Endothelial cell of umbilical vein (primary cell): ENCODE measurements at regions of chr17 and their contacts with region 1.

Region 1: GRCh38 chr17:57243171-57243948 is 13.0 kb upstream of the MSI2 start:
- DNase-seq: peak; percentile 66
- H3K4me3 ChIP-seq: no peak overlapping the region
- H3K27ac ChIP-seq: no peak overlapping the region
- H3K4me1 ChIP-seq: no peaks in the 10 kb centered on the region
- H3K27me3 ChIP-seq: peaks cover 13 to 16% of the 10 kb centered on the region in 2 experiments
- CTCF ChIP-seq: peak; percentile 100
- POLR2A ChIP-seq: no peak

Region 2: GRCh38 chr17:57195785-57196460 is 47.4 kb before region 1 on chr17:
- CTCF ChIA-PET with region 1: interaction called, 10 read pairs
- POLR2A ChIA-PET with region 1: no interaction called
- dilution Hi-C with region 1: no loop called
- intact Hi-C with region 1: no loop called
- DNase-seq: no peak
- H3K4me3 ChIP-seq: no peak overlapping the region
- H3K27ac ChIP-seq: no peak overlapping the region
- H3K4me1 ChIP-seq: no peaks in the 10 kb centered on the region
- H3K27me3 ChIP-seq: peaks cover 0 to 10% of the 10 kb centered on the region in 2 experiments
- CTCF ChIP-seq: no peak
- POLR2A ChIP-seq: no peak

Region 3: DNA sequence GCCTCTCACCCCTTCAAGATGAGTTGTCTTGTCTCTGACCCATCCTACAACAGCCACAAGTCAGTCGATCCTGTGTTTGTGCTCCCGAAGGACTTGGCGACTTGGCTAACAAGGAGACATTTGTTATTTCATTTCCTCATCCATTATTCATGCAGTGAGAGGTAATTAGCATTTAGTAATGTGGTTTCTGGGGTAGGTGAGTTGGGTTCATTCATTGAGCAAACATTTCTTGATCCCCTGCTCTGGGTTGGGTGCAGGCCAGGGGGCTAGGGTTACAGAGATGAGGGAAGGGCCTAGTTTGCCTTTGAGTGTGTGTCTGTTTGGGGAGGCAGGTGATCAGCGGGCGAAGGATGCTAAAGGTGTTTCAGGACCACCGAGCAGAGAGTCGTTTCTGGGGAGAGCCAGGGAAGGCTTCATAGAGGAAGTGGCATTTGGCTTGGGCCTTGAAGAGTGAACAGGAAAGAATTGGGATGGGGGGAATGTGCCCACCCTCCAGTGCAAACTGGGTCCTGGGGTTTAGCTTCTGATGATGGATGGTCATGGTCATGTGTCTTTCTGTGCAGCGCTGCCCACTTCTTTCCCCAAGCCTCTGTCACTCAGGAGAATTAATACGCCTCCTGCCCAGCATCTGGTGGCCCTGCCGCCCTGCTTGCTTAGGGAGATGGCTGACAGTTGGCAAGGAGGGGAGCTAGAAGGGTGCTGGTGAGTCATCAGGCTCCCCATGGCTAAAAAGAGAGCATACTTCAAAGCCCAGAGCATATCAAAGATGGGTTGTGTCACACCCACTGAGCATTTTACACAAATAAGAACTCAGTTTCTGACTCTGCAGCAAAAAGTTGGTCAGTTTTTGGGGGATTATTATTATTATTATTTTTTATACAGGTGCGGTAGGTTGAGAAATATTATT is 51.5 kb after region 1 on chr17:
- CTCF ChIA-PET with region 1: interaction called, 12 read pairs
- POLR2A ChIA-PET with region 1: no interaction called
- dilution Hi-C with region 1: no loop called
- intact Hi-C with region 1: no loop called
- DNase-seq: peak; percentile 4
- H3K4me3 ChIP-seq: peak overlapping the region in 1 of 3 experiments; percentile 16
- H3K27ac ChIP-seq: peak overlapping the region; percentile 83
- H3K4me1 ChIP-seq: peaks cover 22% of the 10 kb centered on the region
- H3K27me3 ChIP-seq: no peaks in the 10 kb centered on the region
- CTCF ChIP-seq: no peak
- POLR2A ChIP-seq: no peak

Region 4: GRCh38 chr17:57468932-57469775 is 225.8 kb after region 1 on chr17:
- CTCF ChIA-PET with region 1: interaction called, 21 read pairs
- POLR2A ChIA-PET with region 1: no interaction called
- dilution Hi-C with region 1: no loop called
- intact Hi-C with region 1: no loop called
- DNase-seq: no peak
- H3K4me3 ChIP-seq: no peak overlapping the region
- H3K27ac ChIP-seq: no peak overlapping the region
- H3K4me1 ChIP-seq: peaks cover 10% of the 10 kb centered on the region
- H3K27me3 ChIP-seq: no peaks in the 10 kb centered on the region
- CTCF ChIP-seq: no peak
- POLR2A ChIP-seq: no peak

Region 5: GRCh38 chr17:57552114-57552624 is 308.8 kb after region 1 on chr17:
- CTCF ChIA-PET with region 1: interaction called, 12 read pairs
- POLR2A ChIA-PET with region 1: no interaction called
- dilution Hi-C with region 1: no loop called
- intact Hi-C with region 1: no loop called
- DNase-seq: no peak
- H3K4me3 ChIP-seq: no peak overlapping the region
- H3K27ac ChIP-seq: no peak overlapping the region
- H3K4me1 ChIP-seq: peaks cover 3% of the 10 kb centered on the region
- H3K27me3 ChIP-seq: no peaks in the 10 kb centered on the region
- CTCF ChIP-seq: peak; percentile 24 to 54
- POLR2A ChIP-seq: no peak

Region 6: DNA sequence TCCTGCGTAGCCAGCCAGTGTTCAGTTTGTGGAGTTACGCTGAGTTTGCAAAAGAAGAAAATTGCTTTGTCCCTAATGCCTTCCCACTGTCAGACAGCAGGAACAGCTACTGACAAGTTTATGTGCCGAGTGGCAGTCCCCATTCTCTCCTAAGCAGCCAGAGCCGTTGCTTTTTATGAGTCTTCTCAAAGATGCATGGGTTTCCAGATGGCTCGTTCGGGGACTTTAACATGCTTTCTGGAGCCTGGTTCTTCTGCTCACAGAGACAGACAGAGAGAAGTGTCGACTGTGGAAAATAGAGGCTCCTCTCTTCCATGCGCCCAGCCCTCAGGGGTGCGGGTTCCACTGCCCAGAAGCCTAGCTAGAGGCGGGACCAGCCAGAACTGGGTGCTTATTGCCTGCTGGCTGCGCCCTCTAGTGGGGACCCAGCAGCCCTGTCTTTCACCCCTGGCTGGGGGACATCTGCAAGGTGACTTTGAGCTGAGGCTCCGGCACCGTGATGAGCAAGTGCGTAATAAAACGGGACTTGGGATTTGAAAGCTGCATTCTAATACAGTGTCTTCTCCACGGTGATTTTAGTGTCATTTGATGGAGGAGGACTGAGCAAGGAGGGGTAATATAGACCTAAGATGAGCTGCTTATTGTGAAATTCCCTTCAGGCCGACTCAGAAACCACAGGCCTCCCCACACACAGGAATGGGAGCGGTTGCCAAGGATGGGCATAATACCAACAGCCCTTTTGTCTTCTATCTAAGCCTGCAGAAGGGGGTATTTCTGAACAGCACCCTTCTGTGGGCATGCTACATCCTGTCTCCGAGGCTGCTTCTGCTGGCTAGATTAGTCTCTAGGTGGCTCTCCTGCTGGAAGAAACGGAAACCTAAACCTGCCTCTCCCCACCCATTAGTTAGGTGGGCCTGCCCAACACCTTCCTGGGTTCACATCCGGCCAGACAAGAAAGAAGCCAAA is 428.6 kb after region 1 on chr17:
- CTCF ChIA-PET with region 1: interaction called, 143 read pairs
- POLR2A ChIA-PET with region 1: no interaction called
- dilution Hi-C with region 1: no loop called
- intact Hi-C with region 1: loop called (anchors 1 kb)
- DNase-seq: peak; percentile 55
- H3K4me3 ChIP-seq: no peak overlapping the region
- H3K27ac ChIP-seq: no peak overlapping the region
- H3K4me1 ChIP-seq: no peaks in the 10 kb centered on the region
- H3K27me3 ChIP-seq: no peaks in the 10 kb centered on the region
- CTCF ChIP-seq: peak; percentile 91 to 94
- POLR2A ChIP-seq: no peak

Region 7: DNA sequence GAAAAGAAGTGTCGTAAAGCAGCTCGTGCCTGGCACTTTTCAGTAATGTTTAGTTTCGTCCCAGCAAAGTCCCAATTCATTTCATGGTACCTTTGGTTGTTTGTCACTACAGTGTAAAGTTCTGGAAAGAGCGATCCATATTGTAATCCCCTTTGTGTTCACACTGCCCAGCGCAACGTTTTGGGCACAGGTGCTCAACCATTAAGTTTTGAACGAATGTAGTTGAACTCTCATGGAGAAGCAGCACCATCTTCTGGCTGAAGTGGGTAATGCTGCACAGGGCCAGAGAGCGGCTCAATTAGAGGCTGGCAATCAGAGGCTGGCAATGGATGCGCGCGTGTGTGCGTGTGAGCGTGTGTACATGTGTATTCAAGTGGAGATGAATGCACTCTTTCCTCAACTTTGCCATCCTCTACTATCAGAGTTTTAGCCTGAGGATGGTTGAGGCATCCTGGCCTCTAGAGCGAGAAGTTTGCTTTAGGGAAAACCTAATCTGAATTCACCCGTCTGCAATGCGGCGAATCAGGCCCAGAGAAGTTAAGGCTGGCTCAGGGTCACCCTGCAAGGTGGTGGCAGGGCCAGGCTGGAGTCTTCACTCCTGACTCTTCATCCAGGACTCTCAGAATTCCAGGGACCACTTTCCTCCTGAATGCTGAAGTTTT is 869.7 kb after region 1 on chr17:
- CTCF ChIA-PET with region 1: interaction called, 29 read pairs
- POLR2A ChIA-PET with region 1: no interaction called
- dilution Hi-C with region 1: no loop called
- intact Hi-C with region 1: no loop called
- DNase-seq: peak; percentile 69
- H3K4me3 ChIP-seq: no peak overlapping the region
- H3K27ac ChIP-seq: no peak overlapping the region
- H3K4me1 ChIP-seq: no peaks in the 10 kb centered on the region
- H3K27me3 ChIP-seq: peaks cover 4 to 5% of the 10 kb centered on the region in 2 experiments
- CTCF ChIP-seq: peak; percentile 84 to 89
- POLR2A ChIP-seq: no peak